ENCODE measurements at regions of chr14 and their contacts with region 1.

Region 1: GRCh38 chr14:70640938-70641547 is 673 bp upstream of the TTC9 start:
- DNase-seq: peak; percentile 24 to 76 (median 62)
- ATAC-seq: peak; percentile 78
- H3K4me3 ChIP-seq: peak overlapping the region; percentile 75
- H3K4me3 Mint-ChIP-seq: peak overlapping the region; percentile 93 to 100 (median 98)
- H3K27ac ChIP-seq: peak overlapping the region; percentile 91
- H3K27ac Mint-ChIP-seq: peak overlapping the region; percentile 85 to 99 (median 94)
- H3K4me1 ChIP-seq: peaks cover 18 to 24% of the 10 kb centered on the region in 2 donors
- H3K4me1 Mint-ChIP-seq: peaks cover 36 to 59% (median 46%) of the 10 kb centered on the region in 7 donors
- H3K27me3 ChIP-seq: no peaks in the 10 kb centered on the region
- H3K27me3 Mint-ChIP-seq: no peaks in the 10 kb centered on the region

Region 2: GRCh38 chr14:70086685-70087379 is 554.2 kb before region 1 on chr14:
- CTCF ChIA-PET with region 1: no interaction called
- POLR2A ChIA-PET with region 1: no interaction called
- intact Hi-C with region 1: no loop called
- DNase-seq: no peak
- ATAC-seq: no peak
- H3K4me3 ChIP-seq: no peak overlapping the region
- H3K4me3 Mint-ChIP-seq: no peak overlapping the region
- H3K27ac ChIP-seq: no peak overlapping the region
- H3K27ac Mint-ChIP-seq: no peak overlapping the region
- H3K4me1 ChIP-seq: no peaks in the 10 kb centered on the region
- H3K4me1 Mint-ChIP-seq: peaks cover 0 to 1% (median 0%) of the 10 kb centered on the region in 7 donors
- H3K27me3 ChIP-seq: peaks cover 0 to 2% of the 10 kb centered on the region in 2 donors
- H3K27me3 Mint-ChIP-seq: peaks cover 22 to 39% (median 32%) of the 10 kb centered on the region in 5 donors

Region 3: GRCh38 chr14:70442750-70443149 is 198.3 kb before region 1 on chr14:
- CTCF ChIA-PET with region 1: no interaction called
- POLR2A ChIA-PET with region 1: no interaction called
- intact Hi-C with region 1: no loop called
- DNase-seq: no peak
- ATAC-seq: no peak
- H3K4me3 ChIP-seq: no peak overlapping the region
- H3K4me3 Mint-ChIP-seq: no peak overlapping the region
- H3K27ac ChIP-seq: no peak overlapping the region
- H3K27ac Mint-ChIP-seq: no peak overlapping the region
- H3K4me1 ChIP-seq: no peaks in the 10 kb centered on the region
- H3K4me1 Mint-ChIP-seq: no peaks in the 10 kb centered on the region
- H3K27me3 ChIP-seq: no peaks in the 10 kb centered on the region
- H3K27me3 Mint-ChIP-seq: peaks cover under 1 to 9% (median 6%) of the 10 kb centered on the region in 5 donors

Region 4: GRCh38 chr14:70600382-70601157 is 40.5 kb before region 1 on chr14 and contains the start of gene MED6:
- CTCF ChIA-PET with region 1: no interaction called
- POLR2A ChIA-PET with region 1: interaction called, 4 read pairs
- intact Hi-C with region 1: loop called (anchors 1 kb)
- DNase-seq: peak; percentile 78 to 94 (median 91)
- ATAC-seq: peak; percentile 100
- H3K4me3 ChIP-seq: peak within 1 kb of the TSS; percentile 96
- H3K4me3 Mint-ChIP-seq: peak within 1 kb of the TSS; percentile 97 to 100 (median 99)
- H3K27ac ChIP-seq: peak within 1 kb of the TSS; percentile 91
- H3K27ac Mint-ChIP-seq: peak within 1 kb of the TSS; percentile 96 to 99 (median 98)
- H3K4me1 ChIP-seq: peaks cover 11 to 14% of the 10 kb centered on the region in 2 donors
- H3K4me1 Mint-ChIP-seq: peaks cover 15 to 47% (median 40%) of the 10 kb centered on the region in 7 donors
- H3K27me3 ChIP-seq: no peaks in the 10 kb centered on the region
- H3K27me3 Mint-ChIP-seq: peaks cover 0 to 22% (median 6%) of the 10 kb centered on the region in 5 donors
- total RNA-seq, gene MED6: 53.4 to 97.0 (median 67.1) TPM

Region 5: DNA sequence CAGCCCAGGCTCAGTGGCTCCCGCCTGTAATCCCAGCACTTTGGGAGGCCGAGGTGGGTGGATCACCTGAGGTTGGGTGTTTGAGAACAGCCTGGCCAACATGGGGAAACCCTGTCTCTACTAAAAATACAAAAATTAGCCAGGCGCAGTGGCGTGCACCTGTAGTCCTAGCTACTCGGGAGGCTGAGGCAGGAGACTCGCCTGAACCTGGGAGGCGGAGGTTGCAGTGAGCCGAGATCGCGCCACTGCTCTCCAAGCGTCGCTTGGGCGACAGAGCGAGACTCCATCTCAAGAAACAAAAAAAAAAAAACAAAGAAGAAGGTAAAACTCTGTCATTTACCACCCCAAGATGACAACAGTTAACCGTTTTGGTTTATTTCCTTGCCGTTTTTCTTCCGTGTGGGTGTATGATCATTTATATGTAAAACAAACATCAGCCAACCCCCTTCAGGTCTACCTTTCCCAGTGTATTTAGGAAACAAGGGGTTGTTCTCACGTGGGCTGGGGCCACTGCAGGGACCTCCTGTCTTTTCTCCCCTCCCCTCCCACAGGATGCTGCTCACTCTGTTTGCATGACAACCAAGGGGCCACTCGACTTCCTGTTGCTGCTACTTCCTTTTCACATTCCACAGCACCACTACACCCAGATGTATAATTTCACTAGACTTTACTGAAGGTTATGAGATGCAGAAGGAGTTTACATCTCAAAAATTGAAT is 14.2 kb after region 1 on chr14:
- CTCF ChIA-PET with region 1: interaction called, 63 read pairs
- POLR2A ChIA-PET with region 1: interaction called, 313 read pairs
- intact Hi-C with region 1: loop called (anchors 1 kb)
- DNase-seq: peak; percentile 29 to 93 (median 91)
- ATAC-seq: peak; percentile 95
- H3K4me3 ChIP-seq: peak overlapping the region; percentile 43
- H3K4me3 Mint-ChIP-seq: peak overlapping the region; percentile 76 to 89 (median 85)
- H3K27ac ChIP-seq: peak overlapping the region; percentile 84
- H3K27ac Mint-ChIP-seq: peak overlapping the region; percentile 94 to 99 (median 98)
- H3K4me1 ChIP-seq: peaks cover 60 to 83% of the 10 kb centered on the region in 2 donors
- H3K4me1 Mint-ChIP-seq: peaks cover 66 to 98% (median 94%) of the 10 kb centered on the region in 7 donors
- H3K27me3 ChIP-seq: no peaks in the 10 kb centered on the region
- H3K27me3 Mint-ChIP-seq: no peaks in the 10 kb centered on the region

Region 6: DNA sequence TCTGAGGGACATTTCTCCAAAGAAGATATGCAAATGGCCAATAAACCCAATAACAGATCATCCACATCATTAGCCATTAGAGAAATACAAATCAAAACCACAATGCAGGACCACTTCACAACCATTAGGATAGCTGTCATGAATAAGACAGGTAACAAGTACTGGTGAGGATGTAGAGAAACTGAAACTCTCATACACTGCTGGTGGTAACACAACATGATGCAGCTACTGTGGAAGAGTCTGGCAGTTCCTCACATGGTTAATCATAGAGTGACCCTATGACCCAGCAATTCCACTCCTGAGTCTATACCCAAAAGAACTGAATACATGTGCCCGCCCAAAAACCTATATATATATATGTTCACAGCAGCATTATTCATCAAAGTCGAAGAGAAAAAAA is 39.7 kb after region 1 on chr14:
- CTCF ChIA-PET with region 1: no interaction called
- POLR2A ChIA-PET with region 1: no interaction called
- intact Hi-C with region 1: loop called in 1 of 2 experiments (anchors 5 kb)
- DNase-seq: no peak
- ATAC-seq: no peak
- H3K4me3 ChIP-seq: no peak overlapping the region
- H3K4me3 Mint-ChIP-seq: no peak overlapping the region
- H3K27ac ChIP-seq: no peak overlapping the region
- H3K27ac Mint-ChIP-seq: no peak overlapping the region
- H3K4me1 ChIP-seq: no peaks in the 10 kb centered on the region
- H3K4me1 Mint-ChIP-seq: peaks cover 0 to 11% (median 0%) of the 10 kb centered on the region in 7 donors
- H3K27me3 ChIP-seq: no peaks in the 10 kb centered on the region
- H3K27me3 Mint-ChIP-seq: no peaks in the 10 kb centered on the region

Region 7: DNA sequence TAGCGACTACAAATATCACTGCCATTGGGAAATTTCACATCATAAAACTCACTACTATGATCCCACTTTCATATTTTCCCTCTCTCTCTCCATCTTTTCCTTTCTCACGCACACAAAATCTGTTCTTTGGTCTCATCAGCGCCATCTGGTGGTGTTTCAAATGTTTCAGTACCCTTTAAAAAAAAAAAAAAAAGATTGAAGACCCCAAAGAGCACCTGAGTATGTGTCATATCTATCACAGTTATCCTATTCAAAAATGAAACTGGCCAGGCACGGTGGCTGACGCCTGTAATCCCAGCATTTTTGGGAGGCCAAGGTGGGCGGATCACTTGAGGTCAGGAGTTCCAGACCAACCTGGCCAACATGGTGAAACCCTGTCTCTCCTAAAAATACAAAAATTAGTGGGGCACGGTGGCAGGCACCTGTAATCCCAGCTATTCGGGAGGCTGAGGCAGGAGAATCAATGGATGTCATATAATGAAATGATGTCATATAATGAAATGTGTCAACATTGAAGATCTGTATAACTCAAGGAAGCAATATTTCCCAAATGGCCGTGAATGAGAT is 73.1 kb after region 1 on chr14:
- CTCF ChIA-PET with region 1: interaction called, 6 read pairs
- POLR2A ChIA-PET with region 1: interaction called, 4 read pairs
- intact Hi-C with region 1: loop called (anchors 1 to 5 kb)
- DNase-seq: peak in 7 of 9 donors; percentile 24 to 62 (median 43)
- ATAC-seq: no peak
- H3K4me3 ChIP-seq: no peak overlapping the region
- H3K4me3 Mint-ChIP-seq: peak overlapping the region in 2 of 10 donors; percentile 38 to 53
- H3K27ac ChIP-seq: no peak overlapping the region
- H3K27ac Mint-ChIP-seq: no peak overlapping the region
- H3K4me1 ChIP-seq: peaks cover 2 to 4% of the 10 kb centered on the region in 2 donors
- H3K4me1 Mint-ChIP-seq: peaks cover 3 to 7% (median 5%) of the 10 kb centered on the region in 7 donors
- H3K27me3 ChIP-seq: no peaks in the 10 kb centered on the region
- H3K27me3 Mint-ChIP-seq: peaks cover 0 to 9% (median 4%) of the 10 kb centered on the region in 5 donors

Measured in naive thymus-derived CD4-positive, alpha-beta T cell (primary cell).